PC-3 (cell line): ENCODE measurements at regions of chr10 and their contacts with region 1.

Region 1: GRCh38 chr10:32346134-32346550 is 816 bp downstream of the EPC1 start:
- DNase-seq: peak; percentile 99
- ATAC-seq: peak; percentile 84
- H3K4me3 ChIP-seq: peak overlapping the region; percentile 87
- H3K27ac ChIP-seq: peak overlapping the region; percentile 96
- H3K4me1 ChIP-seq: peaks cover 36% of the 10 kb centered on the region
- H3K27me3 ChIP-seq: no peaks in the 10 kb centered on the region
- CTCF ChIP-seq: peak; percentile 99

Region 2: GRCh38 chr10:32190890-32191491 is 155.2 kb before region 1 on chr10:
- CTCF ChIA-PET with region 1: no interaction called
- POLR2A ChIA-PET with region 1: no interaction called
- intact Hi-C with region 1: loop called (anchors 1 kb)
- DNase-seq: peak; percentile 58
- ATAC-seq: peak; percentile 27
- H3K4me3 ChIP-seq: no peak overlapping the region
- H3K27ac ChIP-seq: no peak overlapping the region
- H3K4me1 ChIP-seq: no peaks in the 10 kb centered on the region
- H3K27me3 ChIP-seq: no peaks in the 10 kb centered on the region
- CTCF ChIP-seq: peak; percentile 70

Region 3: DNA sequence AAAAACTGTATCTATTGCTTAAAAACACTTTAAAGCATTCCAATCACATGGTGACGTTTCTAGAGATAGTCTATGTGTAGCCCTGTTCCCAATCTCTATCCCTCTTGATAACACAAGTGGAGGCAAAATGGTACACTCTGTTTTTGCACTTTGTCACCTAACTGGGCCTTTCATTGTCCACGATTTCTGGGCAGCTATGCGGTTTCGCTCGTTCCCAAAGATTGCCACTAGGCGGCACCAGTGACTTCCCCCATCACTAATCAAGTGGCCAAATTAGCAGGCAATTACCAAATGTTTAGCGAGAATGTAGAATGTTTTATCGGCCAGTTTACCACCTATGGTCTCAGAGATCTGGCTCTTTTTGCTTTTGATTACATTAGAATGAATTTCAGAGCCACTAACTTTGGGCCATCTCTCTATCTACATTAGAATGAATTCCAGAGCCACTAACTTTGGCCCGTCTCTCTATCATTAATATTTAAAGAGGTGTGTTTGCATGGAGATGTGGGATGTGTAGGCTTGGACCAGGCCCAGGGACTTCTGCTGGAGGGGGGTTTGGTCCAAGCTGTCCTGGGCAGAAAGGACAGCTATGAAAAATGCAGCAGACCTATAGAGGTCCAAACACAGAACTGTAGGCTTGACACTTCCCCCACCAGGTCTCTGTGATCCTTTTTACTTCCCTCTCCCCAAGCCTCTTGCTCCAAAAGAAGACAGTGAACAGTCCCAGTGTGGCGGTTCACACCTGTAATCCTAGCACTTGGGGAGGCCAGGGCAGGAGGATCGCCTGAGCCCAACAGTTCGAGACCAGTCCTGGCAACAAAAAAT is 89.3 kb before region 1 on chr10:
- CTCF ChIA-PET with region 1: interaction called, 5 read pairs
- POLR2A ChIA-PET with region 1: no interaction called
- intact Hi-C with region 1: loop called (anchors 1 kb)
- DNase-seq: peak; percentile 47
- ATAC-seq: peak; percentile 50
- H3K4me3 ChIP-seq: no peak overlapping the region
- H3K27ac ChIP-seq: no peak overlapping the region
- H3K4me1 ChIP-seq: peaks cover 13% of the 10 kb centered on the region
- H3K27me3 ChIP-seq: no peaks in the 10 kb centered on the region
- CTCF ChIP-seq: peak; percentile 87

Region 4: GRCh38 chr10:32331606-32332005 is 14.5 kb before region 1 on chr10:
- CTCF ChIA-PET with region 1: interaction called, 6 read pairs
- POLR2A ChIA-PET with region 1: interaction called, 3 read pairs
- intact Hi-C with region 1: loop called (anchors 1 kb)
- DNase-seq: peak; percentile 82
- ATAC-seq: peak; percentile 80
- H3K4me3 ChIP-seq: peak overlapping the region; percentile 27; the same call in 1 of the 2 replicates
- H3K27ac ChIP-seq: peak overlapping the region; percentile 76
- H3K4me1 ChIP-seq: peaks cover 59% of the 10 kb centered on the region
- H3K27me3 ChIP-seq: no peaks in the 10 kb centered on the region
- CTCF ChIP-seq: no peak

Region 5: DNA sequence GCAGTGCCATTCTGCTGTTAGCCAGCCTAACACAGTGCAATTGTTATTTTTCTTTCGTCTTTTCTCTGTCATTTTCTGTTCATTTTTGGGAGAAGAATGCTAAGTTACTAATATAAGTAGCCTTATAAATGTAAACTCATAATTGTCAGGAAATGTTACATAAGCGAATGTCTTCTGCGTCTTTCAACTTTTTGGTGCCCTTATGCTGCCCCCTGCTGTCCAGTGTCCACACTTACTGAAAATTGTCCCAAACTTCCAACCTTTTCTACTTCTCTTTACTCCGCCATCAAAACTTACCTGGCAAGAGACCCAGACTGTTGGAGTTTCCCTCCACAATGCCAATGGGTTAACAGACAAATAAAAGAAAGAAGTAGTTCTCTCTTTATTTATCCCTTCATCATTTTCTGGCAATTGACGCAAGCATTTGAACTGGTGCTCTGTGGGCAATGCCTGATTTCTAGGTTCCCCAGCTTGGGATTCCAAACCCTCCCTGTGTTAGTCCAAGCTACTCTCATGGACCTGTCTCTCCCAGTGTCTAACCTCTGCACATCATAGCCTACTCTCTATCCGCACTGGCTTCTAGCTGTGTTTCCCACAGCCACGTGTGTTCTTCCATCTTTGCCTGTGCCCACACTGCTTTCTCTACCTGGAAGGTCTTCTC is 21.8 kb after region 1 on chr10:
- CTCF ChIA-PET with region 1: interaction called, 7 read pairs
- POLR2A ChIA-PET with region 1: interaction called, 4 read pairs
- intact Hi-C with region 1: loop called (anchors 1 kb)
- DNase-seq: peak; percentile 92
- ATAC-seq: peak; percentile 59
- H3K4me3 ChIP-seq: no peak overlapping the region
- H3K27ac ChIP-seq: no peak overlapping the region
- H3K4me1 ChIP-seq: peaks cover 9% of the 10 kb centered on the region; the same call in 1 of the 2 replicates
- H3K27me3 ChIP-seq: no peaks in the 10 kb centered on the region
- CTCF ChIP-seq: peak; percentile 98